PC-3 (cell line): ENCODE measurements at regions of chr13 and their contacts with region 1.

Region 1: DNA sequence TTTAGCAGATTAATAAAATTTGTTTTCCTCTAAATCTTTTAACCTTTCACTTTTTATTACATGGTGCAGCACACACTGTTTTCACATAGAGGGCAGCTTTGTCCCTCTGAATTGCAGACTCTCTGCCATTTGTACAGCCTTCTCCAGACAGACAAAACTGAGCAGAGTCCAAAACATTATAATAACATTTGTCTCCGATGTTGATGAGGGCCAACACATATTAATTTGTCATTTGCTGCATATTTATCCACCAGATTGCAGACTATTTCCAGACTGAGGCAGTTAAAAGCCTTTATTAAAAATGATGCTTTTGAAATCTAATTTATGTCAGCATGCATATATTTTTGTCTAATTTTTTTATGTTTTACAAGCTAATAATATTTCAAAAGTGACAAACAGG is 1251.9 kb upstream of the SLC10A2 start:
- DNase-seq: peak; percentile 38
- ATAC-seq: peak; percentile 55
- H3K4me3 ChIP-seq: no peak overlapping the region
- H3K27ac ChIP-seq: no peak overlapping the region
- H3K4me1 ChIP-seq: peaks cover 25% of the 10 kb centered on the region
- H3K27me3 ChIP-seq: no peaks in the 10 kb centered on the region
- CTCF ChIP-seq: peak; percentile 69

Region 2: DNA sequence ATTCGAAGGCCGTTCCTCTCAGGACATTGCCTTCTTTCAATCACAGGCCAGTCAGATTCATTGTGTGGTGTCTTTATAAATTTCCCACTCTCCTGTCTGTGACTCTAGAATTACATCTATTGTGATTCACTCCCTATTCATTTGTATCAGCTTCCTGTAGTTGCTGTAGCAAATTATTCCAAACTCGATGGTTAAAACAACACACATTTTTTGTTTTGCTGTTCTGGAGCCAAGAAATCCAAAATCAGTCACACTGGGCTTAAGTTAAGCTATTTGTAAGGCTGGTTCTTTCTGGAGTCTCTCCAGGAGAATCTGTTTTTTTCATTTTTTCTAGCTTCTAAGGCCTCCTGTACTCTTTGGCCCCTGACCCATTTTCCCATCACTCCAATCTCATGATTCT is 235.1 kb after region 1 on chr13:
- CTCF ChIA-PET with region 1: no interaction called
- POLR2A ChIA-PET with region 1: no interaction called
- intact Hi-C with region 1: loop called (anchors 5 kb)
- DNase-seq: peak; percentile 42
- ATAC-seq: peak; percentile 77
- H3K4me3 ChIP-seq: no peak overlapping the region
- H3K27ac ChIP-seq: no peak overlapping the region
- H3K4me1 ChIP-seq: peaks cover 15% of the 10 kb centered on the region
- H3K27me3 ChIP-seq: no peaks in the 10 kb centered on the region
- CTCF ChIP-seq: no peak

Region 3: DNA sequence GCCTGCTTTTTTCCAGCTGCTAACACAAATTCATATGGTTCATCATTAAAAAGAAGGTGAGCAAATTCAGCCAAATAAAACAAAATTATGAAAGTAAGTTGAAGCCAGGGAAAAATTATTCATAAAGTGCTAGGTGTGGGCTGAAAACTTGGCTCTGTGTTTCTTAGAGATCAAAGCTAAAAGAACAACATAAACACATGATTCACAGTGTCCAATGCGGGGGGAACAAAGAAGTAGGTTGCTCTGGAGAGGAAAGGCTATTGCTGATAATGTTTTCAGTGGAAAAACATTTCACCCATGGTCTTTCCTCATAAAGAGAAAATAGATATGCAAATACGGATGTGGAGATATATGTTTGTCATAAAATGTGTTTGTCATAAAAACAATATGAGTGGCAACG is 439.6 kb after region 1 on chr13:
- CTCF ChIA-PET with region 1: interaction called, 5 read pairs
- POLR2A ChIA-PET with region 1: no interaction called
- intact Hi-C with region 1: loop called (anchors 5 kb)
- DNase-seq: peak; percentile 6
- ATAC-seq: peak; percentile 29
- H3K4me3 ChIP-seq: no peak overlapping the region
- H3K27ac ChIP-seq: no peak overlapping the region
- H3K4me1 ChIP-seq: no peaks in the 10 kb centered on the region
- H3K27me3 ChIP-seq: no peaks in the 10 kb centered on the region
- CTCF ChIP-seq: no peak

Region 4: DNA sequence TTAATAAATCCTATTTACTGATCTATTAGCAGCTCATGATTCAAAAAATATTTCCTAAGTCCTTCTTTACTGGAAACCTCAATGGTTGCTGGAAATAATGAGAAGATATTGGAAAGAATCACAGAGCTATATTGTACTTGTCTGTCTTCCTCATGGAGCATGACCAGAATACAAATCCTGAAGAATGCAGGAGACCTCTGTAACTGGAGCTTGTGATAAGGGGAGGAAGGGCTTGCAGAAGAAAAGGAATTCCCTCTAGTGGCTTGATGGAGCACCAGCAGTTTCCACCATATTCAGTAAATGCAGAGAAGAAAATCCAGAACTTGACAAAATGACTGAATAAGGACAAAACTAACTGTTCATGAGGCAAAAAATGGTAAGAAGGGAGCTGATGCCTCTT is 884.2 kb after region 1 on chr13:
- CTCF ChIA-PET with region 1: no interaction called
- POLR2A ChIA-PET with region 1: no interaction called
- intact Hi-C with region 1: loop called (anchors 10 kb)
- DNase-seq: peak; percentile 43
- ATAC-seq: peak; percentile 66
- H3K4me3 ChIP-seq: no peak overlapping the region
- H3K27ac ChIP-seq: no peak overlapping the region
- H3K4me1 ChIP-seq: no peaks in the 10 kb centered on the region
- H3K27me3 ChIP-seq: no peaks in the 10 kb centered on the region
- CTCF ChIP-seq: peak; percentile 61